ENCODE measurements at regions of chr15 and their contacts with region 1.

Region 1: DNA sequence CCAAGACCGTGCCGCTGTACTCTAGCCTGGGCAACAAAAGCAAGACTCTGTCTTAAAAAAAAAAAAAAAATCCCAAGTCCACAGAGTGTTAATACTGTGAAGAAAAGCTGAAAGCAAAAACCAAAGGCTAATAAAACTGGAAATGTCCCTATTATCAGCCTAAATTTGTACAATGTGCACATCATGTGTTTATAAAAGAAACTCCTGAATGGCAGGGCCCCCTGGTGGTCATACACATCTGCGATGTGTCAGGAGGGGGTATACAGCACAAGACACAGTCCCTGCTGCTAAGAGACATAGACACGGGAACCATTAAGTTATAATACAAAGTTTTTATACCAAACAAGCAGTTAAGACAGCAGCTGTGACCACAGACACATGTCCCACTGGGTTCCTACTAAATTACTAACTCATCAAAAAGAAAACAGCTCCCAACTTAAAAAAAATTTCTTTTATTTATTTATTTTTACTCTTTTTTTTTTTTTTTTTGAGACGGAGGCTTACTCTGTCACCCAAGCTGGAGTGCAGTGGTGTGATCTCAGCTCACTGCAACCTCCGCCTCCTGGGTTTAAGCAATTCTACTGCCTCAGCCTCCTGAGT is 31.0 kb downstream of the IDH2 start:
- DNase-seq: peak; percentile 84 to 89
- ATAC-seq: peak; percentile 76 to 87
- H3K4me3 ChIP-seq: no peak overlapping the region
- H3K27ac ChIP-seq: no peak overlapping the region
- H3K4me1 ChIP-seq: no peaks in the 10 kb centered on the region
- CTCF ChIP-seq: peak; percentile 89
- EP300 ChIP-seq: no peak
- POLR2A ChIP-seq: no peak
- RAD21 ChIP-seq: peak; percentile 74 to 87

Region 2: DNA sequence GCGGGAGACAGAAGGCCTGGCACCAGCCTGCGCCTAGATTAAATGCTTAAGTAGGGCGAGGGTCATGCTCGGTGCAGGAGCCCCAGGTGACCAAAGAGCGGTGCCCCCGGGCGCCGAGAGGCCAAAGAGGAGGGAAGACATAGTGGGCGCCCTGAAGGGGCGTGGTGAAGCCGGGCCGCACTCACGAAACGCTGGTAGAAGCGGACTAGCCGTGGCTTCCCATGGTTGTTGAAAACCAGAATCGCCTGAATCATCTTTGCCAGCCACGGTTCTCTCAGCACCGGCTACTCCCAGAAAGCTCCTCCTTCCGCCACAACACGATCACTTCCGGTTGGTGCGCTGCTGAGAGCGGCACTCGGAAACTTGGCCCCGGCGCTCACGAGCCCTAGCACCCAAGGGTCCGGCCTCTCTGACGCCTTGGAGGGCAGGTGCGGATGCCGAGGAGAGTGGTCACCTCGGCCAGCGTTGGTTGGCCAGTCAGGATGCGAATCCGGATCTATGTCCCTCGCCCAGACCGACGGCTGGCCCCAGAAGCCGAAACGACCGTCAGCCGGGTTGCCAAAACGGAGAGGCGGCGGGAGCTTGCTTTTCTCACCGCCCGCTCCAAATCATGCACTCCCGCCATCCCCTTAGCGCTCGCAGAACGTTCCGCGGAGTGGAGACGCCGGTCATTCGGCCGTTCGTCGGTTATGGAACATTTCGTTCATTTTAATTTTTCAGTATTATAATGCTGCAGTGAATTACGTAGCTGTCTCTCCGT is 177.4 kb before region 1 on chr15 and contains the start of gene AP3S2:
- CTCF ChIA-PET with region 1: interaction called, 60 read pairs
- POLR2A ChIA-PET with region 1: no interaction called
- DNase-seq: peak; percentile 91 to 98
- ATAC-seq: peak; percentile 95 to 97
- H3K4me3 ChIP-seq: peak within 1 kb of the TSS; percentile 87
- H3K27ac ChIP-seq: peak within 1 kb of the TSS; percentile 89 to 92
- H3K4me1 ChIP-seq: peaks cover 14% of the 10 kb centered on the region; the same call in 2 of the 3 replicates
- CTCF ChIP-seq: no peak
- EP300 ChIP-seq: no peak; a peak in 1 of 5 replicates
- POLR2A ChIP-seq: peak; percentile 81
- RAD21 ChIP-seq: peak; percentile 6 to 46; a peak in 3 of 5 replicates
- polyA plus RNA-seq, gene AP3S2: 56.7 and 85.9 TPM in 2 replicates

Region 3: DNA sequence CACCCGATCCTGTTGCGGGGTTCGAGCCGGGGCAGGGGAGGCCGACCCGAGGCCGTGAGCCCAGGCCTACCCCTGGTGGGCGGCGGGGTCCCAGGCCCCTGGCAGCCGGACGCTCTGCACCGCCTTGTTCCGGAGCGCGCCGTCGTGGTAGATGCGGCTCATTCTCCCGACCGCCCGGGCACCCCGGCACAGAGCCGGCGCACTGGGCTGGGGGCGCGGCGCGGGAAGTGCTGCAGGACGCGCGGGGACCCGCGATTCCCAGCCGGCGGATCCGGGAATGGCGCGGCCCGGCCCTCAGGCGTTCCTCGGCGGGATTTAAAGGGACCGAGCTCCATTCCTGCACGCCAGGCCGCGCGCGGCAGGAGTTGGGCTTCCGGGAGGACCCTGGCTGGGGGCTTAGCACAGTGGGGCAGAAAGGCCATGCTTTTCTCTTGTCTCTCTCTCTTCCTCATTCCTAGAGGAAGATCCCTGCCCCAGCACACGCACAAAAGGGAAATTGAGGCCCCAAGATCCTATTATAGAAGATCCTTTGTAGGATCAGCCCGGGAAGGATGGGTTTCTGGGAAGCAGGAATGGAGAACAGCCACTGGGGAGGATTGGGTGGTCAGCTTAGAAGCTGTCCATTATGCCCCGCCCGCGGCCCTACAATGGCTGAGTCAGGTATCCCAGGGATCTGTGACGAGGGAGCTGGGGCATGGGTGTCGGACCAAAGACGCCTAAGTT is 158.5 kb before region 1 on chr15 and contains the start of gene ARPIN:
- CTCF ChIA-PET with region 1: interaction called, 13 read pairs
- POLR2A ChIA-PET with region 1: no interaction called
- DNase-seq: peak; percentile 63 to 77
- ATAC-seq: peak; percentile 81 to 90
- H3K4me3 ChIP-seq: peak within 1 kb of the TSS; percentile 68
- H3K27ac ChIP-seq: peak within 1 kb of the TSS; percentile 78 to 97
- H3K4me1 ChIP-seq: peaks cover 28% of the 10 kb centered on the region
- CTCF ChIP-seq: no peak
- EP300 ChIP-seq: no peak
- POLR2A ChIP-seq: peak; percentile 59
- RAD21 ChIP-seq: no peak
- polyA plus RNA-seq, gene ARPIN: 19.4 and 20.3 TPM in 2 replicates

Region 4: GRCh38 chr15:90001683-90002427 is 69.5 kb before region 1 on chr15:
- CTCF ChIA-PET with region 1: interaction called, 31 read pairs
- POLR2A ChIA-PET with region 1: interaction called, 4 read pairs
- DNase-seq: peak; percentile 67 to 75
- ATAC-seq: peak; percentile 11 to 37
- H3K4me3 ChIP-seq: peak overlapping the region; percentile 85
- H3K27ac ChIP-seq: peak overlapping the region; percentile 93 to 97
- H3K4me1 ChIP-seq: peaks cover 66% of the 10 kb centered on the region
- CTCF ChIP-seq: no peak
- EP300 ChIP-seq: no peak
- POLR2A ChIP-seq: no peak
- RAD21 ChIP-seq: no peak

Region 5: DNA sequence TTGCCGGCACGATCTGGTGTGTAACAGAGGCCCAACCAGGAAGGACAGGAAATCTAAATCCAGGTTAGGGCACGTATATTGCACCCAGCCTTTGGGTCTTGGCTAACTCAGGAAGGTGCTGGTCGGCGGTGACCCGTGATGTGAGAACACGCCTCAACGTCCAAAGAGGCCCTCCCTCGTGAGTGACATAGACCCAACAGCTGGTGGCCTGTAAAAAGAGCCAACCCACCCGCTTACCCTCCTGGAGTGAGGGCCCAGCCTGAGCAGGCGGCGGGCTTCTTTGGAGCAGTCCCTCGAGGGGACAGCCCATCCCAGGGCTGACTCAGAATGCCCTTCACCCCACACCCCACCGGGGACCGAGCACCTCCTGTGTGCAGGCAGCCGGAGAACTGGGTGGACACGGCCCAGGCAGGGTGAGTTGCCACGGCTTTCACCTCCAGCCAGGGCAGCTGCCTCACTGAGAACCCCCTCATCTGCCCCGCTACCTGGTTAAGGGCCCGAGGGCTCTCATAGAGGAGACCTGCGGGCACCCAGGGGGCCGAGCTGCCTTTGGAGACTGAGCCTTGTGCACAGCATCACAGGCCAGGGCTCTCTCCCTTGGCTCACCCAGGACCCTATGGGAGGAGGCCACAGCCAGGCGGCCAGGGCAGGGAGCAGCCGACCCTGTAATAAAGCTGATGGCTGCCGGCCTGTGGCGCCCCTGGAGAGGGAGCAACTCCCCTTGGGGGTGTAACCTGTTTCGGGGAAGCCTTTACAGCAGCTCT is 28.4 kb before region 1 on chr15:
- CTCF ChIA-PET with region 1: interaction called, 34 read pairs
- POLR2A ChIA-PET with region 1: no interaction called
- DNase-seq: no peak
- ATAC-seq: peak in 1 of 2 experiments; percentile 27; a peak in 2 of 6 replicates
- H3K4me3 ChIP-seq: no peak overlapping the region
- H3K27ac ChIP-seq: no peak overlapping the region; a peak in 1 of 6 replicates
- H3K4me1 ChIP-seq: peaks cover 8% of the 10 kb centered on the region; the same call in 2 of the 3 replicates
- CTCF ChIP-seq: no peak
- EP300 ChIP-seq: no peak
- POLR2A ChIP-seq: no peak
- RAD21 ChIP-seq: no peak

Region 6: DNA sequence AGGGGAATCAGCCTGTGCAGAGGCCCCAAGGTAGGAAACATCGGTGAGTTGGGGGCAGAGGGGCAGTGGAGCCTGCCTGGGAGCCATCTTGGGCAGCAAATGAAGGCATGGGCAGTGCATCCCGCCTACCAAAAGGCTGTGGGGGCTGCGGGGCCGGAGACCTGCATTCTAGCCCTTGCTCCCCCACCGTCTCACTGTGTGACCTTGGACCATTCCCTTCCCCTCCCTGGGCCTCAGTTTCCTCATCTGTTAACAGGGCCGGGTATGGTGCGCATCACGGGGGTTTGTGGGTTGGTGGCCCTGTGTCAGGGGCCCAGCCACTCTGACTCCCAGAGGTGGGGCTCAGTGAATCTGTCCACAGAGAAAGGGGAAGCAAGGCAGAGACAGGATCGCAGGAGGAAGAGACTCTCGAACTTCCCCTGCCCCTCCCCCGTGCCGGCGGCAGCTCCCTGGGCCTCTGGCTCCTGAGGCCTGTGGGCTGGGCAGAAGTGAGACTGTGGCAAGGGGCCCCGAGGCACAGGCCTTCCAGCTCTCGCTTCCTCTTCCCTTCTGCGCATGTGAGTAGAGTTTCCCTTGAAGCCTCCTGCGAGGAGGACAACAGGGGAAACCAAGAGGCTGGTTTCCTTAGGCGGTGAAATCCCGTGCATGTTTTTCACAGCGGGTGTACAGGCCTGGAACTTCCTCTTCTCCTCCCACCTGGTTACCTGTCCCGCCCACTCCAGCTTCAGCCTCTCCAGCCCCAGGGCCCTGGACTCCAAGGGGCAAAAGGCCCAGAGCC is 11.9 kb before region 1 on chr15:
- CTCF ChIA-PET with region 1: interaction called, 30 read pairs
- POLR2A ChIA-PET with region 1: no interaction called
- DNase-seq: no peak
- ATAC-seq: no peak
- H3K4me3 ChIP-seq: no peak overlapping the region
- H3K27ac ChIP-seq: no peak overlapping the region
- H3K4me1 ChIP-seq: peaks cover 7% of the 10 kb centered on the region
- CTCF ChIP-seq: no peak
- EP300 ChIP-seq: no peak
- POLR2A ChIP-seq: no peak
- RAD21 ChIP-seq: no peak

Region 7: GRCh38 chr15:90101969-90102890 is 30.9 kb after region 1 on chr15 and contains the start of gene IDH2:
- CTCF ChIA-PET with region 1: interaction called, 12 read pairs
- POLR2A ChIA-PET with region 1: interaction called, 3 read pairs
- DNase-seq: peak; percentile 78 to 92
- ATAC-seq: peak; percentile 91 to 95
- H3K4me3 ChIP-seq: peak within 1 kb of the TSS; percentile 87
- H3K27ac ChIP-seq: peak within 1 kb of the TSS; percentile 86 to 92
- H3K4me1 ChIP-seq: peaks cover 33% of the 10 kb centered on the region
- CTCF ChIP-seq: 0 out of 3 replicates have a peak, but pooled peaks have one; percentile 8
- EP300 ChIP-seq: no peak
- POLR2A ChIP-seq: peak; percentile 97
- RAD21 ChIP-seq: no peak
- polyA plus RNA-seq, gene IDH2: 31.8 and 37.7 TPM in 2 replicates